B cell (primary cell): ENCODE measurements at regions of chr18 and their contacts with region 1.

Region 1: GRCh38 chr18:32760391-32760790 is 12.4 kb downstream of the KLHL14 start:
- DNase-seq: peak; percentile 91
- ATAC-seq: peak; percentile 99
- H3K4me3 ChIP-seq: peak overlapping the region in 2 of 5 experiments; percentile 20 to 34
- H3K4me3 Mint-ChIP-seq: peak overlapping the region; percentile 52
- H3K27ac ChIP-seq: peak overlapping the region; percentile 76 to 81
- H3K27ac Mint-ChIP-seq: peak overlapping the region; percentile 81
- H3K4me1 ChIP-seq: peaks cover 60 to 91% of the 10 kb centered on the region in 2 donors
- H3K4me1 Mint-ChIP-seq: peaks cover 84% of the 10 kb centered on the region
- H3K27me3 ChIP-seq: no peaks in the 10 kb centered on the region
- H3K27me3 Mint-ChIP-seq: no peaks in the 10 kb centered on the region
- CTCF ChIP-seq: no peak

Region 2: GRCh38 chr18:32730620-32731091 is 29.7 kb before region 1 on chr18:
- CTCF ChIA-PET with region 1: interaction called, 3 read pairs
- POLR2A ChIA-PET with region 1: no interaction called
- intact Hi-C with region 1: loop called (anchors 1 kb)
- DNase-seq: peak; percentile 71
- ATAC-seq: peak; percentile 87
- H3K4me3 ChIP-seq: peak overlapping the region in 3 of 5 experiments; percentile 34 to 51 (median 35)
- H3K4me3 Mint-ChIP-seq: peak overlapping the region; percentile 85
- H3K27ac ChIP-seq: peak overlapping the region; percentile 39 to 60
- H3K27ac Mint-ChIP-seq: peak overlapping the region; percentile 88
- H3K4me1 ChIP-seq: peaks cover 17 to 27% of the 10 kb centered on the region in 2 donors
- H3K4me1 Mint-ChIP-seq: peaks cover 39% of the 10 kb centered on the region
- H3K27me3 ChIP-seq: no peaks in the 10 kb centered on the region
- H3K27me3 Mint-ChIP-seq: no peaks in the 10 kb centered on the region
- CTCF ChIP-seq: no peak